Prostate gland (tissue), 2 donors: ENCODE measurements at regions of chr12 and their contacts with region 1.

Region 1: GRCh38 chr12:20369305-20370005 is 1.1 kb downstream of the PDE3A start:
- DNase-seq: peak; percentile 14
- H3K4me3 ChIP-seq: peak overlapping the region; percentile 37 to 44
- H3K27ac ChIP-seq: peak overlapping the region; percentile 72
- H3K4me1 ChIP-seq: no peaks in the 10 kb centered on the region
- H3K27me3 ChIP-seq: no peaks in the 10 kb centered on the region
- CTCF ChIP-seq: peak in 2 of 4 experiments; percentile 11 to 18
- POLR2A ChIP-seq: no peak

Region 2: GRCh38 chr12:19744734-19745218 is 624.7 kb before region 1 on chr12:
- intact Hi-C with region 1: loop called (anchors 10 kb)
- DNase-seq: no peak
- H3K4me3 ChIP-seq: no peak overlapping the region
- H3K27ac ChIP-seq: no peak overlapping the region
- H3K4me1 ChIP-seq: peaks cover 7% of the 10 kb centered on the region
- H3K27me3 ChIP-seq: no peaks in the 10 kb centered on the region
- CTCF ChIP-seq: no peak
- POLR2A ChIP-seq: no peak

Region 3: DNA sequence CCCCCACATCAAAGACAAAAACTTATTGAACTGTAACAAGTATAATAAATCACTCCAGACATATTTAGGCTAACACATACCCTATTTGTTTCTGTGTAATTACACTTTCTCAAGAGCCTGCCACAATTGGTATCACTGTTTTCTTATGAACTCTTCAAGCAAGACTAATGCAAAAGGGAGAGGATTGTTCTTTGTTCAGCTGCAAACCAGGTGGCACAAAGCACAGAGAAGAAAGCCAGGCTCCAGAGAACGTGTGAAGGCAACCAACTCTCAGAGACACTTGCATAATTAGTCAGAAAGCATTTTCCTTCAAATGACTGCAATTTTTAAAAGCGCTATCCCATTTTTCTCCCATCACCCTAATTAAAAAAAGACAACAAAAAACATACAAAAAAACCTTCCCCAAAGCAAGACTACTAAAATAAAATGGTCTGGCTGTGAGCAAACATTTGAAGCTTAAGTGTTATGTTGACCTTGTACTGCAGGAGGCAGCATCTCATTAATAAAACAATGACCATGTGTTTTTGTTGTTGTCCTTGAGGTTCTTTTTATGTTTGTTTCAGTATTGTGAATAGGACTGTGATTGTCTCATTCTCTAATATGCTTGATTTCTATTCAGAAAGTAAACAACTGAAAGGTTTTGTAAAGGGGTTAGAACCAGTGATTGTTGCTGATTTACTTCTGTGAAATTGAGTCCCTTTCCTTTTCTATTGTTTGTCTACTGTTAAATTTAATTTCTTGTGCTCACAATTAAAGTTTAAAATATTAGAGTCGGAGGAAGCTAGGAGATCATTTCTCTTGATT is 453.9 kb before region 1 on chr12:
- intact Hi-C with region 1: loop called (anchors 5 kb)
- DNase-seq: no peak
- H3K4me3 ChIP-seq: no peak overlapping the region
- H3K27ac ChIP-seq: no peak overlapping the region
- H3K4me1 ChIP-seq: no peaks in the 10 kb centered on the region
- H3K27me3 ChIP-seq: no peaks in the 10 kb centered on the region
- CTCF ChIP-seq: peak in 3 of 4 experiments; percentile 42 to 74 (median 60)
- POLR2A ChIP-seq: no peak

Region 4: GRCh38 chr12:20212658-20213555 is 156.5 kb before region 1 on chr12:
- intact Hi-C with region 1: loop called (anchors 5 kb)
- DNase-seq: peak; percentile 54
- H3K4me3 ChIP-seq: no peak overlapping the region
- H3K27ac ChIP-seq: peak overlapping the region; percentile 56 to 65
- H3K4me1 ChIP-seq: no peaks in the 10 kb centered on the region
- H3K27me3 ChIP-seq: no peaks in the 10 kb centered on the region
- CTCF ChIP-seq: no peak
- POLR2A ChIP-seq: no peak

Region 5: GRCh38 chr12:20272801-20273200 is 96.7 kb before region 1 on chr12:
- intact Hi-C with region 1: loop called (anchors 2 kb)
- DNase-seq: no peak
- H3K4me3 ChIP-seq: no peak overlapping the region
- H3K27ac ChIP-seq: no peak overlapping the region
- H3K4me1 ChIP-seq: no peaks in the 10 kb centered on the region
- H3K27me3 ChIP-seq: no peaks in the 10 kb centered on the region
- CTCF ChIP-seq: no peak
- POLR2A ChIP-seq: no peak

Region 6: GRCh38 chr12:20549107-20549719 is 179.8 kb after region 1 on chr12:
- intact Hi-C with region 1: loop called (anchors 10 kb)
- DNase-seq: no peak
- H3K4me3 ChIP-seq: no peak overlapping the region
- H3K27ac ChIP-seq: no peak overlapping the region
- H3K4me1 ChIP-seq: no peaks in the 10 kb centered on the region
- H3K27me3 ChIP-seq: no peaks in the 10 kb centered on the region
- CTCF ChIP-seq: peak in 1 of 4 experiments; percentile 14
- POLR2A ChIP-seq: no peak

Region 7: GRCh38 chr12:20567413-20567812 is 198.0 kb after region 1 on chr12:
- intact Hi-C with region 1: no loop called
- DNase-seq: no peak
- H3K4me3 ChIP-seq: no peak overlapping the region
- H3K27ac ChIP-seq: no peak overlapping the region
- H3K4me1 ChIP-seq: no peaks in the 10 kb centered on the region
- H3K27me3 ChIP-seq: no peaks in the 10 kb centered on the region
- CTCF ChIP-seq: no peak
- POLR2A ChIP-seq: no peak

Region 8: GRCh38 chr12:20601668-20602280 is 232.3 kb after region 1 on chr12:
- intact Hi-C with region 1: loop called (anchors 5 kb)
- DNase-seq: no peak
- H3K4me3 ChIP-seq: no peak overlapping the region
- H3K27ac ChIP-seq: no peak overlapping the region
- H3K4me1 ChIP-seq: no peaks in the 10 kb centered on the region
- H3K27me3 ChIP-seq: no peaks in the 10 kb centered on the region
- CTCF ChIP-seq: peak in 3 of 4 experiments; percentile 36 to 54 (median 38)
- POLR2A ChIP-seq: no peak

Region 9: GRCh38 chr12:20657496-20657895 is 288.0 kb after region 1 on chr12:
- intact Hi-C with region 1: no loop called
- DNase-seq: no peak
- H3K4me3 ChIP-seq: no peak overlapping the region
- H3K27ac ChIP-seq: no peak overlapping the region
- H3K4me1 ChIP-seq: no peaks in the 10 kb centered on the region
- H3K27me3 ChIP-seq: no peaks in the 10 kb centered on the region
- CTCF ChIP-seq: no peak
- POLR2A ChIP-seq: no peak